Aorta (tissue), 5 donors: ENCODE measurements at regions of chr7 and their contacts with region 1.

Region 1: DNA sequence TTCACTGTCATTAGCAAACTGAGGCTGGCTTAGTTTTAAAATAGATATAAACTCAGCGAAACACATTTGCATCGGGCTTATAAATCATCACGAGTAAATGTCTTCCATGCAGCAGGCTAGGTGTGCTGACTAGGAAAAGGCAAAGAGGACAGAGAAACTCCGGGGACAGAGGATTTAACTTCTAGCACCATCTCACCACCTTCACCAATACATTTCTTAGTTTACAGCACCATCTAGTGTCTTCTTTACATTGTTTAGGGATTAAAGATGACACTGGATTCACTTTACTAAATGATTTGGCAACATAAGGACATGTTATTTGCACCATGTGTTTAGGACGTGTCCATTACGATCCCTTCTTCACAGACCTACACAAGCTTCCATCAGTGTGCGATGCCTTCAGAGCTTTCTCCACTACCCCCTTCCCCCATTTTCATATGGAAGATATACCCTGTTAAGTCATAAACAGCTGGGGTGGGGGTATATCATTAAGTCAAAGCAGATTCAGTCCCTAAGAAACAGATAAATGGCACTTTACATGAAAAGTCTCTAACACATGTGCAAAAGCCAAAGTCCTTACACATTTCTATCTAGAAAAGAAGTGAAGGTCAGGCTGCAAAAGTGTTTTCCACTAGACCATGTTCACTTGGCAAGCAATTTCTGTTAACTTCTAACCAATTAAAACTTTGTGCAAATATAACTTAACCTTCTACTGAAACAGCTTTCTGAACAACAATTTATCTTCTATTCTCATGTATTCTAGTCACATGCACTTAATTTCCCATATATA is 103.3 kb downstream of the GRB10 start:
- DNase-seq: no peak
- ATAC-seq: no peak
- H3K4me3 ChIP-seq: no peak overlapping the region
- H3K27ac ChIP-seq: no peak overlapping the region
- H3K4me1 ChIP-seq: peaks cover 0 to 6% of the 10 kb centered on the region in 2 donors
- H3K27me3 ChIP-seq: no peaks in the 10 kb centered on the region

Region 2: DNA sequence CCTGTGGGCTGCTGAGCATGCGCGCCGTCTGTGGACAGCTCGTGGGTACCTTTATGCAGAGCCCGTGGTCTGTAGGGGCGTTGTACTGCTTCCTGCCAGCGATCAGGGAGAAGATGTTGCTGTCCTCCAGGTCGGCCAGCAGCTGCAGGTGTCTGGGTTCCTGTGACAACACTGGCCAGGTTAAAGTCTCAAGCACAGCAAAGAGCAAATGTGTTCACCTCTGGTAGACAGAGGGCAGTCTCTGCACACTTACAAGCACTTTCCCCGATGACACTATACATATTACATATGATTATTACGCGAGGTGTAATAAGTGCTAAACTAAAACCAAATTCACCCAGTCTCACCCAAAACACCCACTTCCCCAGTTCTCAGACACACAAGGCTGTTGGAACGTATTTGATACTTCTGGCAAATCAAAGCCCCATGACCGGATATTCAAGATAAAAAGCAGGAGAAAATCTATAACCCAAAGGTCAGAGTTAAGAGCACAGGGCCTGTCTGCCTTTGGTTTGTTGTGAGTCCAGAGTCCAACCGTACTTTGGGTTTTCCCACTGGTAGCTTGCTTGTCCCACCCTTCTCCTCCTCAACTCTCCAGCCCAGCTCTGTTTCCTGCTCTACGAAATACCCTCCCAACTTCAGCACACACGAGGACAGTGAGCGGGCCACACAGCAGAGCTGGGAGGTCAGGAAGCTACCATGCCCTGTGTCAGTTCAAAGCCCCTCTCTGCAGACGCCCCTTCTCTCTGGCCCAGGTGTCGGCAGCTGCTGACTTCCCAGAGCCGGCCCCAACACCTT is 64.5 kb before region 1 on chr7:
- intact Hi-C with region 1: loop called in 1 of 2 experiments (anchors 5 kb)
- DNase-seq: no peak
- ATAC-seq: no peak
- H3K4me3 ChIP-seq: no peak overlapping the region
- H3K27ac ChIP-seq: no peak overlapping the region
- H3K4me1 ChIP-seq: peaks cover 0 to 2% of the 10 kb centered on the region in 2 donors
- H3K27me3 ChIP-seq: no peaks in the 10 kb centered on the region

Region 3: GRCh38 chr7:51141451-51142003 is 462.1 kb after region 1 on chr7:
- intact Hi-C with region 1: loop called in 1 of 2 experiments (anchors 5 kb)
- DNase-seq: no peak
- ATAC-seq: no peak
- H3K4me3 ChIP-seq: no peak overlapping the region
- H3K27ac ChIP-seq: no peak overlapping the region
- H3K4me1 ChIP-seq: no peaks in the 10 kb centered on the region
- H3K27me3 ChIP-seq: no peaks in the 10 kb centered on the region